ENCODE measurements at regions of chr1 and their contacts with region 1.

Region 1: GRCh38 chr1:93180723-93181613 is at the start of gene CCDC18:
- DNase-seq: peak; percentile 80
- ATAC-seq: peak; percentile 25
- H3K4me3 Mint-ChIP-seq: peak within 1 kb of the TSS; percentile 93
- H3K27ac Mint-ChIP-seq: peak within 1 kb of the TSS; percentile 98
- H3K4me1 Mint-ChIP-seq: peaks cover 53% of the 10 kb centered on the region
- H3K27me3 Mint-ChIP-seq: no peaks in the 10 kb centered on the region
- total RNA-seq, gene CCDC18: 30.5 to 37.7 TPM

Region 2: DNA sequence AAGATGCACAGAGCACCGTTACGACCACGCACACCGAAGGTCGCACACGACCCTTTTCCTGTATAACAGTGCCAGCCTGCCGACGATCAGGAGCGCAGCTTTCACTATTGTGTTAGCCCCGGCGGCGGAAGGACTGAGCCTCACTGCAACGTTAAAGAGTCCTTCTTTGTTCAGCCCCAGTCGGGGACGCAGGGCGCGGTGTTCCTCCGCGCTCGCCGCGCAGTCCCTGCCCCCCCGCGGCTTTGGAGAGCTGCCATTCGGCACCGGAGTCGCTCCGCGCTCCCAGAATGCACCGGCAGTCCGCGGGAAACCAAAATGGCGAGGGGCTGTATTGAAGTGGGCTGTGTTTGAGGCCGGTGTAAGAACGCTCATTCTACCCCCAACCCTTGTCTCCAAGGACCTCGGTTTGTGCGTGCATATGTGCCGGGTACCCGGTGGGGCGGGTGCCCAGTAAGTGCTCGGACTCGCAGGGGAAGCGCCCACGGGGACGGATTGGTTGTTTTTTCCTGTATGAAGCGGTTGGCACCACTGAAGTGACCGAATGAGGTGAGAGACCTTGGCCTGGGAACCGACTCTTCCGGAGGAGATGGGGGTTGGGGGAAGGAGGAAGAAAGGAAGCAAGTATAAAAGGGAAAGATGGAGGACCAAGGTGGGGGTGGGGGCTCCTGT is 101.8 kb before region 1 on chr1 and contains the start of gene MTF2:
- CTCF ChIA-PET with region 1: interaction called, 11 read pairs
- DNase-seq: peak; percentile 97
- ATAC-seq: peak; percentile 96
- H3K4me3 Mint-ChIP-seq: peak within 1 kb of the TSS; percentile 98
- H3K27ac Mint-ChIP-seq: peak within 1 kb of the TSS; percentile 95
- H3K4me1 Mint-ChIP-seq: peaks cover 28% of the 10 kb centered on the region
- H3K27me3 Mint-ChIP-seq: no peaks in the 10 kb centered on the region
- total RNA-seq, gene MTF2: 70.6 to 75.7 TPM

Region 3: GRCh38 chr1:93148001-93148400 is 33.0 kb before region 1 on chr1:
- CTCF ChIA-PET with region 1: no interaction called
- DNase-seq: no peak
- ATAC-seq: no peak
- H3K4me3 Mint-ChIP-seq: no peak overlapping the region
- H3K27ac Mint-ChIP-seq: no peak overlapping the region
- H3K4me1 Mint-ChIP-seq: peaks cover 10% of the 10 kb centered on the region
- H3K27me3 Mint-ChIP-seq: no peaks in the 10 kb centered on the region

Measured in activated CD8-positive, alpha-beta memory T cell treated with anti-CD3 and anti-CD28 coated beads, Interleukin-2, amount 10 ng/mL, durations not matched to agents 7 days and 5 days (primary cell).